Pancreas (tissue), 10 donors: ENCODE measurements at regions of chr22 and their contacts with region 1.

Region 1: GRCh38 chr22:35409783-35410662 is 10.1 kb downstream of the MCM5 start:
- DNase-seq: peak in 1 of 6 donors; percentile 61
- ATAC-seq: peak in 3 of 4 donors; percentile 14 to 81 (median 62)
- H3K4me3 ChIP-seq: no peak overlapping the region
- H3K27ac ChIP-seq: peak overlapping the region in 2 of 4 donors; percentile 22 to 50
- H3K4me1 ChIP-seq: no peaks in the 10 kb centered on the region
- H3K27me3 ChIP-seq: no peaks in the 10 kb centered on the region
- CTCF ChIP-seq: no peak

Region 2: DNA sequence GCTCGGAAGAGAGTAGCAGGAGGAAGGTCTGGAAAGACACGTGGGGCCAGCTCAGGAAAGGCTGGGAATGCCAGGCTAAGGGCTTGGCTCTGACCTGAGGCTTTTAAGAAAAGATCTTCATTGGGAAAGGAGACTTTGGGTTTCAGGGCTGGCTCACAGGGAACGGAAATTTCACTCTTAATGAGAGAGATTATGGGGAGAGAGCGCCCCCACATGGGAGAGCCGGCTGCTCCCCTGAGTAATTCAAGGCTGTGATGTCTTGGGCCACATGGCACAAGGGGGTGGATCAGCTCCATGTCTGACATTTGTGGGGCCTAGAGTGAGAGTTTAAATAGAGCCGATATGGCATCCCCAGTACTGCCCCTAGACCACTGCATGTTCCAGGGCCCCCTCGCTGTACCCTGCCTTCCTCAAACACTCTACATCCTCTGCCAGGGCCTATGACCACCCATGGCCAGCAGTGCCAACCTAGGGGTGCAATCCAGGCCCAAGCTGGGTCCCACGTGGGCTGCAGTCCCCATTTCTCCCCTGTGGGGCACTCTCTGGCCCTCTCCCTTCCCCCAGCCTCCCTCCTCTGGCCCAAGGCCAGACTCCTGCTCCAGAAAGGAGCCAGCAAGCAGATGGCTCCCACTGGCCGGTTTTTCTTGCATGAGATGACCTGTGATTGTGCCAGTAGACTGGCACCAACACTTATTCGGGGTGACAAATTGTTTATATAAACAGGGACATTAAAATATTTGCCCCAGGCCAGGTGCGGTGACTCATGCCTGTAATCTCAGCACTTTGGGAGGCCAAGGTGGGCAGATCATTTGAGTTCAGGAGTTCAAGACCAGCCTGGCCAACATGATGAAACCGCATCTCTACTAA is 268.9 kb before region 1 on chr22:
- intact Hi-C with region 1: no loop called
- DNase-seq: no peak
- ATAC-seq: no peak
- H3K4me3 ChIP-seq: no peak overlapping the region
- H3K27ac ChIP-seq: no peak overlapping the region
- H3K4me1 ChIP-seq: no peaks in the 10 kb centered on the region
- H3K27me3 ChIP-seq: no peaks in the 10 kb centered on the region
- CTCF ChIP-seq: no peak

Region 3: GRCh38 chr22:35367301-35367886 is 42.6 kb before region 1 on chr22:
- intact Hi-C with region 1: loop called in 1 of 3 experiments (anchors 10 kb)
- DNase-seq: no peak
- ATAC-seq: peak in 1 of 4 donors; percentile 6
- H3K4me3 ChIP-seq: no peak overlapping the region
- H3K27ac ChIP-seq: no peak overlapping the region
- H3K4me1 ChIP-seq: peaks cover 0 to 3% (median 0%) of the 10 kb centered on the region in 3 donors
- H3K27me3 ChIP-seq: no peaks in the 10 kb centered on the region
- CTCF ChIP-seq: no peak